H1 (cell line): ENCODE measurements at regions of chr1 and their contacts with region 1.

Region 1: GRCh38 chr1:33168556-33169289 is 13.1 kb downstream of the TRIM62 start:
- DNase-seq: no peak
- H3K4me3 ChIP-seq: no peak overlapping the region
- H3K27ac ChIP-seq: no peak overlapping the region
- H3K4me1 ChIP-seq: peaks cover 0 to 23% (median 14%) of the 10 kb centered on the region in 4 experiments; a peak in 6 of 7 replicates
- H3K27me3 ChIP-seq: no peaks in the 10 kb centered on the region
- CTCF ChIP-seq: peak in 2 of 3 experiments; percentile 8 to 24; a peak in 3 of 4 replicates
- EP300 ChIP-seq: no peak
- POLR2A ChIP-seq: no peak
- RAD21 ChIP-seq: peak in 1 of 2 experiments; percentile 27; a peak in 1 of 4 replicates

Region 2: DNA sequence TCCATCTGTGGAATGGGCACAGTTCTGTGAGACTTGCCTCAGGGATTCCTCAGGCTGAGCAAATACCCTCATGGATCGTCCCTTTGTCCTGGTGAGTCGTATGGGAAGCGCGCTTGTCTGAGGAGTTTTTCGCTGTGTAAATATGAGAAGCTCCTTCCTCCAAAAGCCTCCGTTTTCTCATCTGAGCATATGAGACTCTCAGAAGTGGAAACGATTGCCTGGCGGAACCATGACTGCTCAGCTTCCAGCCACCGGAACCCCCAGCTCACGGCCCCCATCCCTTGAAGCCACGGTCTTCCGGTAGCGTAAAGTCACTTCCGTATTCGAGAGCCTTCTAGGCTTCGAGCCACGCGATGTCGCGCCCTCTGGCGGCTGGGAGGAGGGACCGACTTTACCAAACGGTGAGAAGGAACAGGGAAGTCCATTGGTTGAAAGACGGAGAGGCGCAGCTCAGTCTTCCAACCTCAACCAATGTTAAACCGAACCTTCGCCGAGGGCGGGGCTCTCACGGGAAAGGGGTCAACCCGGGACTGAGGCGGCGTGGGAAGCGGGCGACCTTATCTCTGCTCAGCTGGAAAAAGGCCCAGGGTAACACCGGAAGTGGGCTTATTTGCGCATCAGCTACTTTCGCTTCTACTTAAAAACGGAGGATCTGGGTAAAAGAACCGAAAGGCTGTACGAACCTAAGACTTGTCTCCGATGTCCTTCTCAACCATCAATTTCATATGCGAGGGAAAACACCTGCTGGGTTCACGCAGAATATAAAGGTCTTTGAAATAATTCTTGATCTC is 41.5 kb before region 1 on chr1:
- CTCF ChIA-PET with region 1: interaction called, 10 read pairs
- POLR2A ChIA-PET with region 1: no interaction called
- DNase-seq: peak; percentile 92 to 93
- H3K4me3 ChIP-seq: peak overlapping the region; percentile 72 to 93 (median 88)
- H3K27ac ChIP-seq: peak overlapping the region; percentile 68
- H3K4me1 ChIP-seq: peaks cover 0 to 7% (median 2%) of the 10 kb centered on the region in 4 experiments; a peak in 6 of 7 replicates
- H3K27me3 ChIP-seq: peaks cover 0 to 6% (median 4%) of the 10 kb centered on the region in 4 experiments; a peak in 5 of 7 replicates
- CTCF ChIP-seq: peak; percentile 81 to 99 (median 93)
- EP300 ChIP-seq: 0 out of 3 replicates have a peak, but pooled peaks of 1 of the 2 experiments have one; percentile 37
- POLR2A ChIP-seq: peak; percentile 71 to 88
- RAD21 ChIP-seq: peak in 1 of 2 experiments; percentile 34; a peak in 3 of 4 replicates

Region 3: DNA sequence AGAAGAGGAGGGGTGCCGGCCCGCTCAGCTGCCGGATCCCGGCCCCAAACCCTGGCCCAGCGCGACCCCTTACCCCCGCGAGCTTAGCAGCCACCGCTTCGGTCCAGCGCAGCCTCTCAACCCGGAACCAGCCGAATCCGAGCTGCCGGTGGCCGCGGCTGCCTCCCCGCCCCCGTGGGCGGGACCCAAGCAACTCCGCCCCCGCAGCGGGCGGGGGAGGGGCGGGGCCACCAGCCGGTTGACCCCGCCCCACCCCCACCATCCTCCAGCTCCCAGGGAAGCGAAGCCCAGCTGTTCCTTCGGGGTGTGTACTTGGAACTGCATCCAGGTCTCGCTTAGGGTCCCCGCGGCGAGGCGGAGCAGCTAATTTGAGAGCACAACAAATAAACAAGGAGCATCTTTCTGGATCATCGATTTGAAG is 13.2 kb after region 1 on chr1 and contains the start of gene TRIM62:
- CTCF ChIA-PET with region 1: interaction called, 6 read pairs
- POLR2A ChIA-PET with region 1: interaction called, 10 read pairs
- DNase-seq: peak; percentile 61 to 86
- H3K4me3 ChIP-seq: peak within 1 kb of the TSS; percentile 35 to 79 (median 62)
- H3K27ac ChIP-seq: no peak within 1 kb of the TSS
- H3K4me1 ChIP-seq: peaks cover 0 to 15% (median 9%) of the 10 kb centered on the region in 4 experiments; a peak in 6 of 7 replicates
- H3K27me3 ChIP-seq: no peaks in the 10 kb centered on the region; a peak in 1 of 7 replicates
- CTCF ChIP-seq: no peak
- EP300 ChIP-seq: no peak; a peak in 1 of 3 replicates
- POLR2A ChIP-seq: peak in 1 of 2 experiments; percentile 46; a peak in 2 of 3 replicates
- RAD21 ChIP-seq: no peak
- total RNA-seq, gene TRIM62: 10.3 and 10.8 TPM in 2 replicates

Region 4: GRCh38 chr1:33228935-33229487 is 60.3 kb after region 1 on chr1:
- CTCF ChIA-PET with region 1: no interaction called
- POLR2A ChIA-PET with region 1: no interaction called
- DNase-seq: no peak
- H3K4me3 ChIP-seq: no peak overlapping the region
- H3K27ac ChIP-seq: no peak overlapping the region
- H3K4me1 ChIP-seq: no peaks in the 10 kb centered on the region; a peak in 1 of 7 replicates
- H3K27me3 ChIP-seq: no peaks in the 10 kb centered on the region
- CTCF ChIP-seq: no peak
- EP300 ChIP-seq: no peak
- POLR2A ChIP-seq: no peak
- RAD21 ChIP-seq: no peak